Heart left ventricle (tissue), 16 donors: ENCODE measurements at regions of chr5 and their contacts with region 1.

Region 1: GRCh38 chr5:1799602-1800471 is at the start of gene MRPL36:
- DNase-seq: peak; percentile 93 to 98 (median 97)
- ATAC-seq: peak; percentile 87 to 93 (median 90)
- H3K4me3 ChIP-seq: peak within 1 kb of the TSS; percentile 61 to 100 (median 96)
- H3K27ac ChIP-seq: peak within 1 kb of the TSS; percentile 81 to 96 (median 92)
- H3K4me1 ChIP-seq: peaks cover 0 to 65% (median 29%) of the 10 kb centered on the region in 12 donors
- H3K27me3 ChIP-seq: no peaks in the 10 kb centered on the region
- CTCF ChIP-seq: no peak
- POLR2A ChIP-seq: peak; percentile 14 to 87
- total RNA-seq, gene MRPL36: 45.6 to 77.6 (median 55.3) TPM

Region 2: GRCh38 chr5:1344975-1345838 is 454.6 kb before region 1 on chr5 and contains the start of gene CLPTM1L:
- intact Hi-C with region 1: loop called in 1 of 10 experiments (anchors 10 kb)
- DNase-seq: peak; percentile 86 to 93 (median 89)
- ATAC-seq: peak; percentile 83 to 98 (median 96)
- H3K4me3 ChIP-seq: peak within 1 kb of the TSS; percentile 78 to 100 (median 94)
- H3K27ac ChIP-seq: peak within 1 kb of the TSS; percentile 54 to 94 (median 91)
- H3K4me1 ChIP-seq: peaks cover 0 to 25% (median 20%) of the 10 kb centered on the region in 12 donors
- H3K27me3 ChIP-seq: no peaks in the 10 kb centered on the region
- CTCF ChIP-seq: no peak
- POLR2A ChIP-seq: peak; percentile 50 to 88
- total RNA-seq, gene CLPTM1L: 31.0 to 60.2 (median 39.4) TPM

Region 3: DNA sequence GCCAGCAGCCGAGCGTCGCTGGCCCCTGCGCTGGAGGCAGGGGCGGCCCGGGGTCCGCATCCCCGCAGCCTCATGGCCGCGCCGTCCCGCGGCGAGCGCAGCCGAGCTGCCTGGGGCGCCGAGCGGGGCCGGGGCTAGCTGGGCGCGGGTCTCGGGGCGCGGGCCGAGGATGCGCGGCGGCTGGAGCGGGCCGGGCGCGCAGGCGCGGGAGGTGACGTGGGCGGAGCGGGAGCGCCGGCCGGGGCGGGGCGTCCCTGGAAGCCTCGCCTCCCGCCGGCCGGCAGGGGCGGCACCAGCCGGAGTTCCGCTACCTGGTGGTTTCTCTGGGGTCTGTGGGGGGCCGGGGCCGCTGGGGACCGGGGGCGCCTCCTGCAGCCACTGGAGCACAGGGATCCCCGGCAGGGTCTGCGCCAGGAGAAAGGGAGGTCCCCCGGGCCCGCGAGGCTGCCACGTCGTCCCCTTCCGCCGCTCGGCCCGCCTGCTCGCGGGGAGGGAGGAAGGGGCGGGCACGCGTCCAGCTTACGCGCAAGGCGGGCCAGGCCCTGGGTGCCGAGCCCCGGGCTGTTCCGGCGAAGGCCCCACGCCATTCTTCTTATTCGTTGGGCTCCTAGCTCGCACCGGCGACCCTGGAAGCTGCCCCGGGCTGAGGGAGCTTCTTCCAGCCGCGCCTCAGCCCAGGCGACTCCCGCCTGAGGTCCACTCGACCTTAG is 275.9 kb before region 1 on chr5 and contains the start of gene LPCAT1:
- intact Hi-C with region 1: loop called in 1 of 10 experiments (anchors 10 kb)
- DNase-seq: peak; percentile 84 to 92 (median 87)
- ATAC-seq: peak; percentile 67 to 95 (median 92)
- H3K4me3 ChIP-seq: peak within 1 kb of the TSS; percentile 63 to 99 (median 80)
- H3K27ac ChIP-seq: peak within 1 kb of the TSS; percentile 78 to 97 (median 94)
- H3K4me1 ChIP-seq: peaks cover 0 to 29% (median 17%) of the 10 kb centered on the region in 12 donors
- H3K27me3 ChIP-seq: no peaks in the 10 kb centered on the region
- CTCF ChIP-seq: peak in 10 of 12 donors; percentile 7 to 46 (median 28)
- POLR2A ChIP-seq: peak in 1 of 2 donors; percentile 38
- total RNA-seq, gene LPCAT1: 8.2 to 30.6 (median 9.9) TPM

Region 4: GRCh38 chr5:1751016-1751878 is 48.6 kb before region 1 on chr5:
- intact Hi-C with region 1: no loop called
- DNase-seq: peak in 3 of 5 donors; percentile 11 to 57 (median 20)
- ATAC-seq: no peak
- H3K4me3 ChIP-seq: no peak overlapping the region
- H3K27ac ChIP-seq: no peak overlapping the region
- H3K4me1 ChIP-seq: no peaks in the 10 kb centered on the region
- H3K27me3 ChIP-seq: peaks cover 0 to 16% (median 0%) of the 10 kb centered on the region in 9 donors
- CTCF ChIP-seq: no peak
- POLR2A ChIP-seq: no peak

Region 5: GRCh38 chr5:1834721-1835429 is 35.0 kb after region 1 on chr5:
- intact Hi-C with region 1: loop called in 1 of 10 experiments (anchors 5 kb)
- DNase-seq: peak in 1 of 5 donors; percentile 10
- ATAC-seq: no peak
- H3K4me3 ChIP-seq: no peak overlapping the region
- H3K27ac ChIP-seq: no peak overlapping the region
- H3K4me1 ChIP-seq: peaks cover 0 to 33% (median 0%) of the 10 kb centered on the region in 12 donors
- H3K27me3 ChIP-seq: peaks cover 0 to 7% (median 0%) of the 10 kb centered on the region in 9 donors
- CTCF ChIP-seq: no peak
- POLR2A ChIP-seq: no peak

Region 6: GRCh38 chr5:1883120-1883924 is 83.5 kb after region 1 on chr5:
- intact Hi-C with region 1: loop called in 7 of 10 experiments (anchors 2 to 10 kb)
- DNase-seq: peak in 3 of 5 donors; percentile 56 to 65 (median 58)
- ATAC-seq: peak in 3 of 4 donors; percentile 47 to 62 (median 52)
- H3K4me3 ChIP-seq: peak overlapping the region; percentile 13 to 61 (median 48)
- H3K27ac ChIP-seq: peak overlapping the region in 11 of 12 donors; percentile 32 to 87 (median 71)
- H3K4me1 ChIP-seq: peaks cover 0 to 64% (median 17%) of the 10 kb centered on the region in 12 donors
- H3K27me3 ChIP-seq: peaks cover 30 to 95% (median 59%) of the 10 kb centered on the region in 9 donors
- CTCF ChIP-seq: peak in 7 of 12 donors; percentile 4 to 47 (median 26)
- POLR2A ChIP-seq: peak in 1 of 2 donors; percentile 26

Region 7: GRCh38 chr5:1948663-1949652 is 149.1 kb after region 1 on chr5:
- intact Hi-C with region 1: loop called in 3 of 10 experiments (anchors 5 to 10 kb)
- DNase-seq: peak; percentile 70 to 90 (median 78)
- ATAC-seq: peak; percentile 86 to 92 (median 90)
- H3K4me3 ChIP-seq: peak overlapping the region in 6 of 12 donors; percentile 5 to 21 (median 14)
- H3K27ac ChIP-seq: peak overlapping the region in 10 of 12 donors; percentile 23 to 93 (median 60)
- H3K4me1 ChIP-seq: peaks cover 0 to 36% (median 18%) of the 10 kb centered on the region in 12 donors
- H3K27me3 ChIP-seq: peaks cover 0 to 3% (median 0%) of the 10 kb centered on the region in 9 donors
- CTCF ChIP-seq: no peak
- POLR2A ChIP-seq: no peak

Region 8: DNA sequence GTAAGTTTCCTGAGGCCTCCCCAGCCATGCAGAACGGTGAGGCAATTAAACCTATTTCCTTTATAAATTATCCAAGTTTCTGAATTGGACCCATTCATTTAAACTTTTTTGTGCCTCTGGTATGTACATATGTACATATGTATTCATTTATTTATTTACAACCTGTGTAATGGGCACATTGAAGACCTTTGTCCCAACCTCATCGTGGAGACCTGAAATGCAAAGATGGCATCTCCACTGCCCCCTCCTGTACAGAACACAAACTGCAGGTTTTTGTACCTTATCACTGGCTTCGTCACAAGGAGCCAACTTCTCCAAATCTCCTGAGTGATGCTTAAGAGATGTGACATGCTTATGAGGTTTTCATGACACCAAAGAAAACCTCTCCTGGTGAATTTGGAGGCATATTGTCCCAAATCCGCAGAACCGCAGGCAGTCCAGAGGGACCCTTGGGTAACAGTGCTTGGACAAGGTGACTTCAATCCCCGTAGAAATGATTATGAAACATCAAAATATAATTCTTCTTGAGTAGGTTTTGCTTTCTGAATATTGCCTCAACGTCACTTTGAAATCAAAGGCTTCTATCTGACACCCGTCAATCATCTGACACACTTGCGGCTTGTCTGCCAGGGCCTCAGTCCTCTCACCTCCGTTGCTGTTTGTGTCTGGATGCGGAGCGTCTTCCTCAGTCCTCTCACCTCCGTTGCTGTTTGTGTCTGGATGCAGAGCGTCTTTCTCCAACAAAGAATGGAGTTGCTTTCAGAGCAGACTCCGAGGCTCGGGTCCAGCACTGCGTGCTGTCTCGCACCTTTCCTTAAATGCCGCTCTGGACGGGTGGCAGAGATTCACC is 217.9 kb after region 1 on chr5:
- intact Hi-C with region 1: loop called in 1 of 10 experiments (anchors 10 kb)
- DNase-seq: no peak
- ATAC-seq: no peak
- H3K4me3 ChIP-seq: no peak overlapping the region
- H3K27ac ChIP-seq: no peak overlapping the region
- H3K4me1 ChIP-seq: peaks cover 0 to 7% (median 0%) of the 10 kb centered on the region in 12 donors
- H3K27me3 ChIP-seq: peaks cover 0 to 4% (median 0%) of the 10 kb centered on the region in 9 donors
- CTCF ChIP-seq: peak in 8 of 12 donors; percentile 12 to 43 (median 26)
- POLR2A ChIP-seq: no peak